HEK293 (cell line): ENCODE measurements at regions of chr3 and their contacts with region 1.

Region 1: GRCh38 chr3:69120879-69121464 is 1.4 kb downstream of the LMOD3 start:
- H3K4me3 ChIP-seq: no peak overlapping the region
- H3K27ac ChIP-seq: no peak overlapping the region
- H3K4me1 ChIP-seq: no peaks in the 10 kb centered on the region
- CTCF ChIP-seq: peak; percentile 58; the same call in 1 of the 2 replicates

Region 2: DNA sequence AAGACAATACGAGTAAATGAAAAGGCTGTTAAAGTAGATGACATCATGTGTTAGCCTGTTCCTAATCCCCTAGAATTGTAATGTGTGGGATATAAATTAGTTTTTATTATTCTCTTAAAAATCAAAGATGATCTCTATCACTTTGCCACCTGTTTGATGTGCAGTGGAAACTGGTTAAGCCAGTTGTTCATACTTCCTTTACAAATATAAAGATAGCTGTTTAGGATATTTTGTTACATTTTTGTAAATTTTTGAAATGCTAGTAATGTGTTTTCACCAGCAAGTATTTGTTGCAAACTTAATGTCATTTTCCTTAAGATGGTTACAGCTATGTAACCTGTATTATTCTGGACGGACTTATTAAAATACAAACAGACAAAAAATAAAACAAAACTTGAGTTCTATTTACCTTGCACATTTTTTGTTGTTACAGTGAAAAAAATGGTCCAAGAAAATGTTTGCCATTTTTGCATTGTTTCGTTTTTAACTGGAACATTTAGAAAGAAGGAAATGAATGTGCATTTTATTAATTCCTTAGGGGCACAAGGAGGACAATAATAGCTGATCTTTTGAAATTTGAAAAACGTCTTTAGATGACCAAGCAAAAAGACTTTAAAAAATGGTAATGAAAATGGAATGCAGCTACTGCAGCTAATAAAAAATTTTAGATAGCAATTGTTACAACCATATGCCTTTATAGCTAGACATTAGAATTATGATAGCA is 15.8 kb before region 1 on chr3:
- CTCF ChIA-PET with region 1: interaction called, 11 read pairs
- POLR2A ChIA-PET with region 1: no interaction called
- H3K4me3 ChIP-seq: no peak overlapping the region
- H3K27ac ChIP-seq: no peak overlapping the region
- H3K4me1 ChIP-seq: no peaks in the 10 kb centered on the region
- CTCF ChIP-seq: no peak

Region 3: GRCh38 chr3:69403454-69403853 is 282.5 kb after region 1 on chr3:
- CTCF ChIA-PET with region 1: no interaction called
- POLR2A ChIA-PET with region 1: no interaction called
- H3K4me3 ChIP-seq: no peak overlapping the region
- H3K27ac ChIP-seq: no peak overlapping the region
- H3K4me1 ChIP-seq: no peaks in the 10 kb centered on the region
- CTCF ChIP-seq: no peak

Region 4: GRCh38 chr3:69425261-69425660 is 304.3 kb after region 1 on chr3:
- CTCF ChIA-PET with region 1: interaction called, 11 read pairs
- POLR2A ChIA-PET with region 1: no interaction called
- H3K4me3 ChIP-seq: no peak overlapping the region
- H3K27ac ChIP-seq: no peak overlapping the region
- H3K4me1 ChIP-seq: no peaks in the 10 kb centered on the region
- CTCF ChIP-seq: peak; percentile 26; the same call in 1 of the 2 replicates